Activated CD4-positive, alpha-beta memory T cell treated with anti-CD3 and anti-CD28 coated beads, Interleukin-2, amount 10 ng/mL, durations not matched to agents 7 days and 5 days (primary cell): ENCODE measurements at regions of chr2 and their contacts with region 1.

Region 1: DNA sequence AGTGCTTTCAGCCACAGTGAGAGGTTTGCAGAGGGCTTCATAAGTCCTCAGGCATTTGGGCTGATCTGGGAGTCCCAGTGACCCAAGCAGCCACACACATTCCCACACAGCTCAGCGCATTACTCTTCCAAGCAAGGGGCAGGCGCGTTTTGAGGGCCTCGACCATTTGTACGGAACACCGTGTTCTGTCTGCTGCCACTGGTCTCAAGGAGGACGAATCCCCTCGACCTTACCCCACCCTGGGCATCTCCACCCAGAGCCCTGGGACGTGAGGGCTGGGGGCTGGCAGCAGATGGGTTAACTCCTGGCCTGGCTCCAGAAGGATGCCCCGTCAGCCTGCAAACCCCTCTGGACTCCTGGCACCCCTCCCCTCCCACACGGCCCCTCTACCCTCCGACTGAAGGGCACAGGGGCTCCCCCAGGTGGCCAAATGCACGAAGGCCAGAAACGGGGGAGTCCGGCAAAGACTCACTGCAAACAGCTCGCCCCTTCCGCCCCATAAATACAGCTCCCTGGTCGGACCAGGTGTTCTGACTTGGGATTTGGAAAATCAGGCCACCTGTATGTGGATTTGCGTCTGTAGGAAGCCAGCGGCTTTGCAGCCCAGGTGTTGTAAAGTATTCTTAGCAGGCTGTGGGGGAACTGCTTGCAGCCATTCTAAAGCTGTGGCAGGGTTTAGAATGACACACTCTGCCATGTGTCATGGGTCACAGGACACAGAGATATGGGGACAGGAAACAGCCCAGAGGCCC is 33.6 kb upstream of the PTMA start:
- DNase-seq: peak; percentile 65
- H3K4me3 Mint-ChIP-seq: no peak overlapping the region
- H3K27ac Mint-ChIP-seq: peak overlapping the region; percentile 35
- H3K4me1 Mint-ChIP-seq: peaks cover 20% of the 10 kb centered on the region
- H3K27me3 Mint-ChIP-seq: no peaks in the 10 kb centered on the region

Region 2: GRCh38 chr2:231648587-231649174 is 26.1 kb before region 1 on chr2:
- CTCF ChIA-PET with region 1: interaction called, 19 read pairs
- POLR2A ChIA-PET with region 1: interaction called, 4 read pairs
- DNase-seq: peak; percentile 66
- H3K4me3 Mint-ChIP-seq: no peak overlapping the region
- H3K27ac Mint-ChIP-seq: no peak overlapping the region
- H3K4me1 Mint-ChIP-seq: peaks cover 5% of the 10 kb centered on the region
- H3K27me3 Mint-ChIP-seq: peaks cover 2% of the 10 kb centered on the region

Region 3: GRCh38 chr2:231687133-231687852 is 12.5 kb after region 1 on chr2:
- CTCF ChIA-PET with region 1: interaction called, 22 read pairs
- POLR2A ChIA-PET with region 1: no interaction called
- DNase-seq: peak; percentile 56
- H3K4me3 Mint-ChIP-seq: no peak overlapping the region
- H3K27ac Mint-ChIP-seq: no peak overlapping the region
- H3K4me1 Mint-ChIP-seq: peaks cover 1% of the 10 kb centered on the region
- H3K27me3 Mint-ChIP-seq: peaks cover 5% of the 10 kb centered on the region

Region 4: DNA sequence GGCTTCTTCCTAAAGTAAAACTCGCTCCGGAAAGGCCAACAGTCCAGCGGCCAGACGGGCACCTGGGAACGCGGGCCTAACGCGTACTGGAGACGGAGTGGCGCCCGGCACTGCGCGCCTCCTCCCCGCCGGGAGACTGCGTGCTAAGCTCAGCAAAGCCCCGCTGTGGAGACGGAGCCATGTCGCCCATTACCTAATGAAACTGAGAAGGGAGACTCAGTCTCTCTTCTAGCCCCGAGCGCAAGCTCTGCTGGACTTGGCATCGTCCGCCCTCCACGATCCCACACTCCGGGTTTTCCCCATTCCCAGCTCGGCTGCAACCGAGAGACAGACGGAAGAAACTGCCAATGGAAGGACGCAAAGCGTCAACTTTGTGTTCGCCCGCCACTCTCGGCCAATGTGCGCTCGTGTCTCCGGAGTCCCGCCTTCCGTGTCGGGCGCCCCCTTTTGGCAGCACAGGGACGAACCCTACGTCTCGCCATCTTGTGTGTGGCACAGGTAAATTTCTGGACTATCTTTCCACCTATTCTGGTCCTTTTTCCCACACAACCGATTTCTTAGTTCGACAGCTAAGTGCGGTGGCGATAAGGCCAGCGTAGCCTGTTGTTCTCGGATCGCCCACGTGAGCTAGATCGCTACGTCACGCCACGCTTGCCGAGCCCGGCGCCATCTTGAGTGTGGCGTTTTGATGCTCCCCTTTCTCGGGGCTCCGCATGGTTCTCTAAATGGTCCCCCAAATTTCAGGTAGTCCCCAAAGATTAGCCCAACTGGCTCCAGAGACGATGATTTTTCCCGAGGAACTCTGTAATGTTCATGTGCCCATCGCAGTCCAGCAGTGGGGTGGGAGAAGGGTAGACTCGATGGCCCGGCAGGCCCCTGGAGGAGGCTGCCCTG is 32.2 kb after region 1 on chr2:
- CTCF ChIA-PET with region 1: interaction called, 244 read pairs
- POLR2A ChIA-PET with region 1: interaction called, 141 read pairs
- DNase-seq: peak; percentile 97
- H3K4me3 Mint-ChIP-seq: peak overlapping the region; percentile 91
- H3K27ac Mint-ChIP-seq: peak overlapping the region; percentile 100
- H3K4me1 Mint-ChIP-seq: peaks cover 20% of the 10 kb centered on the region
- H3K27me3 Mint-ChIP-seq: no peaks in the 10 kb centered on the region